HEK293 (cell line): ENCODE measurements at regions of chr11 and their contacts with region 1.

Region 1: GRCh38 chr11:106091480-106092123 is 14.1 kb downstream of the AASDHPPT start:
- H3K4me3 ChIP-seq: no peak overlapping the region
- H3K27ac ChIP-seq: no peak overlapping the region
- H3K4me1 ChIP-seq: no peaks in the 10 kb centered on the region
- CTCF ChIP-seq: no peak

Region 2: DNA sequence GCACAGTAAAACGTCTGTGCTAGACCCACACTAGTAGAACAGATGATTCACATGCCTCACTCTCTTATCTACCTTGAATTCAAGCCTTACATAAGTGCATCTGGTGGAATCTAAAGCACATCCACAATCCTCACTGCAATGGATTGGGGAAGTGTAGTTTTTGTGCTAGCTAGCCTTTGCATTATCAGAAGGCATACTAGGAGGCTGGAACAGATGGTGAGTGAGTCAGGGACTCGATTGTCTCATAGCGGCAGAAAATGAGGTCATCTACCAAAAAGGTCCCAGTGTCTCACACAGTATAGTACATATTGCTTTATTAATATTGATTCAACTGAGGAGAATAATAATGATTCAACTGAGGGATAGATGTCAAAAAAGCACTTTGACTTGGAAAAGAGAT is 78.9 kb before region 1 on chr11:
- CTCF ChIA-PET with region 1: no interaction called
- POLR2A ChIA-PET with region 1: no interaction called
- H3K4me3 ChIP-seq: no peak overlapping the region
- H3K27ac ChIP-seq: no peak overlapping the region
- H3K4me1 ChIP-seq: no peaks in the 10 kb centered on the region; the same call in 1 of the 2 replicates
- CTCF ChIP-seq: no peak

Region 3: GRCh38 chr11:106133529-106133928 is 41.9 kb after region 1 on chr11:
- CTCF ChIA-PET with region 1: interaction called, 12 read pairs
- POLR2A ChIA-PET with region 1: no interaction called
- H3K4me3 ChIP-seq: no peak overlapping the region
- H3K27ac ChIP-seq: no peak overlapping the region
- H3K4me1 ChIP-seq: no peaks in the 10 kb centered on the region
- CTCF ChIP-seq: no peak